ENCODE measurements at regions of chrX and their contacts with region 1.

Region 1: GRCh38 chrX:85052636-85053343 is 49.1 kb downstream of the APOOL start:
- DNase-seq: peak; percentile 79
- H3K4me3 ChIP-seq: peak overlapping the region; percentile 63
- H3K27ac ChIP-seq: peak overlapping the region; percentile 81
- H3K4me1 ChIP-seq: peaks cover 27% of the 10 kb centered on the region
- H3K27me3 ChIP-seq: no peaks in the 10 kb centered on the region

Region 2: DNA sequence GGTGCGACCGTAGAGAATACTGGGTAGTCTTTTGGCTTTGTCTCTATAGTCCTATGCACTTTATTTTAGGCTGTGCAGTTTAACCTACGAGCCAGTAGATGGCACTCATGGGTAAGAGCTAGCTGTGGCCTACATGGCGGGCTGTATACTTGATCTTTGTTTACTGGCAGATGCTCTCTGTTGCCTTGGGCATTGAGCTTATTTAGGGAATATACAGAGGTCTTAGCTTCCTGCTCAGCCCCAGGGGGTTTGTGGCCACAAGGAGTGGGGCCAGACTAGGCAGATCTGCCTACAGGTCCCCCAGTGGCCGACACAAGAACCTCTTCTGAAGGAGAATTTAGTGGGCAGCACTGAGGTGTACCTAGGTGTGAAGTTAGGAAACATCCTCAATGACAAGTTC is 323.0 kb before region 1 on chrX:
- in situ Hi-C with region 1: loop called (anchors 25 kb)
- DNase-seq: peak; percentile 52
- H3K4me3 ChIP-seq: no peak overlapping the region
- H3K27ac ChIP-seq: no peak overlapping the region
- H3K4me1 ChIP-seq: no peaks in the 10 kb centered on the region
- H3K27me3 ChIP-seq: no peaks in the 10 kb centered on the region

Region 3: DNA sequence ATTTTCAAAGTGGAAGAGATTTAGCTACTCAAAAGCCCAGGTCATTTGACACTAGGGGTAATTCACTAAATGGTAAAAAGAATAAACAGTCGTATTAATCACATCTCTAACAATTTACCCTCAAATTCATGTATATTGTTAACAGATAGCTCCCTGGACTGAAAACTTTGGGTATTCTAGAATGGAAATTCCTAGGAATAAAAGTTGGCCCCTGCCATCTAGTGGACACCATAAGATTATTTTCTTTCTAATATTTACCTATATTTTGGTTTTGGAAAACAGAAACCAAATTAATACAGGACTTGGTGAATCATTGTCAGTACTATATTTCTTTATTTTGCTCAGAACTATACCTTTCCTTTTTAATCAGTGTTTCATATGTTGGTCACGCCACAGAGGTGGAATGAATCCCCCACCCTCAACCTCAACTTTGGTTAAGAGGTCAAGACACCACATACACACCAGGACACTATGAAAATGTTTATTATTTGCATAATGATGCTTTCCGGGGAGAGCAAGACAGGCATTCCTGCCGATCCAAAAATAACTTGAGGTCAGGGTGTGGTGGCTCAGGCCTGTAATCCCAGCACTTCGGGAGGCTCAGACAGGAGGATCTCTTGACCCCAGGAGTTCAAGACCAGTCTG is 145.3 kb before region 1 on chrX:
- in situ Hi-C with region 1: no loop called
- DNase-seq: peak; percentile 35
- H3K4me3 ChIP-seq: no peak overlapping the region
- H3K27ac ChIP-seq: no peak overlapping the region
- H3K4me1 ChIP-seq: no peaks in the 10 kb centered on the region
- H3K27me3 ChIP-seq: no peaks in the 10 kb centered on the region

Region 4: DNA sequence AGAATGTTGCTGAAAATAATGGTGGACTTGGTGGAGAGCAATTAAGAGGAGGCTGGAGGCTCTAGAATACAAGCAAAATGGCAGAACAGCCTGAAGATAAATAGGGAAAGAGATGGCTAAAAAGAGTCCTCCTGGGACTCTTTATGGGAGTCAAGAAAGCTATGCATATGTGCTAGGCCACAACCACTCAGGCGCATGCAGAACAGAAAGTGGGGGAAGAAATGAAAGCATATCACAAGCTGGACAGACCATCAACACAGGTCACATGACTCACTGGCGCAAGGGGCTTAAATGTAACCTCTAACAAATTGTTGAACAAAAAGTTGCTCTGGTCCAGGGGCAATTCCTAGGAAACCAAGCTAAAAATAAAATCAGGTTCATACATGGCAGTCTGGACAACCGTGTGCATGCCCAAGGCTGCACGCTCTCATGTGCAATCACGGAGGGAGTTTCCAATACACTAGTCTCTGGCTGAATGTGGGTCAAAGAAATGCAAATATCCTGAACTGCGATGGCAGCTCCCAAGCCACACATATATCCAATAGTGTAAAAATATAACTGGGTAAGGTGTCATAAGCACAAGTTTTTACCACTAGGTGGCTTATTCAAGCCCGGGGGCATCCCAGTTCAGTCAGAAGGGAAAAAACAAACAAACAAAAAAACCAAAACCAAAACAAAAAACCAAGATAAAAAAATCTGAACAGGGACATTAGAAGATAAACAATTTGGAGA is 236.4 kb after region 1 on chrX:
- in situ Hi-C with region 1: no loop called
- DNase-seq: no peak
- H3K4me3 ChIP-seq: no peak overlapping the region
- H3K27ac ChIP-seq: no peak overlapping the region
- H3K4me1 ChIP-seq: no peaks in the 10 kb centered on the region
- H3K27me3 ChIP-seq: no peaks in the 10 kb centered on the region